ENCODE measurements at regions of chr7 and their contacts with region 1.

Region 1: GRCh38 chr7:45111298-45112223 is at the start of gene TBRG4:
- DNase-seq: peak; percentile 79 to 94
- H3K4me3 ChIP-seq: peak within 1 kb of the TSS; percentile 68 to 93 (median 85)
- H3K27ac ChIP-seq: peak within 1 kb of the TSS; percentile 94
- H3K4me1 ChIP-seq: peaks cover 0 to 3% (median under 1%) of the 10 kb centered on the region in 4 experiments; a peak in 2 of 7 replicates
- H3K27me3 ChIP-seq: peaks cover 0 to 4% (median 1%) of the 10 kb centered on the region in 4 experiments; a peak in 1 of 7 replicates
- CTCF ChIP-seq: peak in 1 of 3 experiments; percentile 7; a peak in 1 of 4 replicates
- EP300 ChIP-seq: no peak
- POLR2A ChIP-seq: peak; percentile 95 to 99
- RAD21 ChIP-seq: peak; percentile 1 to 15; a peak in 1 of 4 replicates
- total RNA-seq, gene TBRG4: 137 and 146 TPM in 2 replicates

Region 2: DNA sequence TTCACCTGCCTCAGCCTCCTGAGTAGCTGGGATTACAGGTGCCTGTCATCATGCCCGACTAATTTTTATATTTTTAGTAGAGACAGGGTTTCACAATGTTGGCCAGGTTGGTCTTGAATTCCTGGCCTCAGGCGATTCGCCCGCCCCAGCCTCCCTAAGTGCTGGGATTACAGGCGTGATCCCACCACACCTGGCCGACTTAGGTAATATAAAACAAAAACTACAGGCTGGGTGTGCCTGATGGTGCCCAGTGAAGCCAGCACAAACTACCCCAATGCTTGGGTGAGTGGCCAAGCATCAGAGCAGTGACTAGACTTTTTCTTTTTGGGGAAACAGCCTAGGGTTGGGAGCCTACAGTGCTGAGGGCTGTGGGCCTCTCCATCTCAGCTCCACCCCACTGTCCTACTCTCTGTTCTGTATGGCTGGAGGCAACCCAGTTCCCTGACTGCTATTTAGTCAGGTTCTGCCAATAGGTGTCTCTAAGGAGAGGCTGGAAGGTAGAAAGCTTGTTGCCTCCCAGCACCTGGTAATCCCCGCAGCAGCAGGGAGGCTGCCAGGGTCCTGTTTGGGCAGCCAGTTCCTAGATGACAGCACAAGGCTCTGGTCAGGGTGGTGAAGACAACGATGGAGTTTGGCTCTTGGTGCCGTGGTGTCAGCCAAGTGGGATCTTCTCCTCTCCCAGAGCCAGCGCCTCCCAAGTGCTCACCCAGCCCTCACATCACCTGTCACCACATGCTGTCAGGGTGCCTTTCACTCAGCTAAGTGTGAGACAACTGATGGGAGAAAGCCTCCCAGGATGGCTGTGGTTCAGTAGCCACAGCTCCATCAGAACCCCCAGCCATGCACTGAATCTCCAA is 12.3 kb before region 1 on chr7:
- CTCF ChIA-PET with region 1: interaction called, 4 read pairs
- POLR2A ChIA-PET with region 1: interaction called, 30 read pairs
- DNase-seq: no peak
- H3K4me3 ChIP-seq: no peak overlapping the region
- H3K27ac ChIP-seq: no peak overlapping the region
- H3K4me1 ChIP-seq: no peaks in the 10 kb centered on the region
- H3K27me3 ChIP-seq: no peaks in the 10 kb centered on the region
- CTCF ChIP-seq: no peak
- EP300 ChIP-seq: no peak
- POLR2A ChIP-seq: peak in 1 of 2 experiments; percentile 42; a peak in 1 of 3 replicates
- RAD21 ChIP-seq: peak in 1 of 2 experiments; percentile 8; a peak in 1 of 4 replicates

Region 3: GRCh38 chr7:45122975-45123860 is 11.7 kb after region 1 on chr7:
- CTCF ChIA-PET with region 1: interaction called, 6 read pairs
- POLR2A ChIA-PET with region 1: interaction called, 43 read pairs
- DNase-seq: no peak
- H3K4me3 ChIP-seq: peak overlapping the region in 1 of 4 experiments; percentile 5; a peak in 1 of 8 replicates
- H3K27ac ChIP-seq: no peak overlapping the region
- H3K4me1 ChIP-seq: peaks cover 0 to 13% (median 10%) of the 10 kb centered on the region in 4 experiments; a peak in 6 of 7 replicates
- H3K27me3 ChIP-seq: no peaks in the 10 kb centered on the region
- CTCF ChIP-seq: no peak
- EP300 ChIP-seq: no peak
- POLR2A ChIP-seq: no peak
- RAD21 ChIP-seq: no peak